Uterus (tissue), 4 donors: ENCODE measurements at regions of chr5 and their contacts with region 1.

Region 1: GRCh38 chr5:157476702-157477408 is 16.8 kb downstream of the NIPAL4 start:
- DNase-seq: peak in 1 of 2 donors; percentile 54
- H3K4me3 ChIP-seq: no peak overlapping the region
- H3K27ac ChIP-seq: no peak overlapping the region
- H3K4me1 ChIP-seq: no peaks in the 10 kb centered on the region
- H3K27me3 ChIP-seq: no peaks in the 10 kb centered on the region
- CTCF ChIP-seq: peak; percentile 59 to 74 (median 66)
- POLR2A ChIP-seq: no peak

Region 2: GRCh38 chr5:157328277-157328912 is 148.5 kb before region 1 on chr5:
- intact Hi-C with region 1: loop called (anchors 5 kb)
- DNase-seq: peak; percentile 59 to 66
- H3K4me3 ChIP-seq: peak overlapping the region in 1 of 2 donors; percentile 7
- H3K27ac ChIP-seq: no peak overlapping the region
- H3K4me1 ChIP-seq: no peaks in the 10 kb centered on the region
- H3K27me3 ChIP-seq: no peaks in the 10 kb centered on the region
- CTCF ChIP-seq: peak; percentile 83 to 88 (median 87)
- POLR2A ChIP-seq: no peak

Region 3: DNA sequence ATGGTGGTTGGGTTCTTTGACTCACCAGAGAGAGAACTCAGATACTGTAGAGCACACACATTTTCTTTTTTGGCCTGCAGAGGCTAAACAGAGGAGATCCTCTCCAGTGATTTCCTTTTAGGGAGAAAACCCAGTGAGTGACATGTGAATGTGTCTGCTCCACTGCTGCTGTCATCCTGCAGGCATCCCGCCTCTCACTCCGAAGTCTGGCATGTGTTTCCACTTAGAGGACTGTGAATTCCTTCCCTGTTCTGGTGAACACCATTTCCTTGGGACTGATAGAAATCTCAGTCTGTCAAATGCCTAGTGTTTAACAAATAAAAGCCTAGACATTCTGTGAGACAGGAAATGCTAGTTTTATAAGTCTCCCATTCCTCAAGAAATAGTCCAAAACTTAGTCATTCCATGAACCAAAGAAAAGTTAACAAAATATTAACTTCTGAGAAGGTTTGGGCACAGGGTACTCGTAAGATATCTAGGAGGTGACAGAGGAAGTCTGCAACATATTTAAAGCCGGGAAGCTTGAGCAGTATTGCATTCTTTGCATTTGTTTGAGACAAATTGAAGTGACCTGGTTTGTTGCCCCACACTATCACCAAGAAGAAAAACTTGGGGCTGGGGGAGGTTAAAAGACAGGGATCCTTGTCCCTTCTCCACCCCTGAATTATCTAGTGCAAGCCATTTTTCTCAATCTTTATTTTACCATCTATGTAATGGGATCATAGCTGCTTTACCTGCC is 91.7 kb before region 1 on chr5:
- intact Hi-C with region 1: loop called (anchors 10 kb)
- DNase-seq: peak; percentile 73 to 84
- H3K4me3 ChIP-seq: no peak overlapping the region
- H3K27ac ChIP-seq: peak overlapping the region; percentile 87 to 88
- H3K4me1 ChIP-seq: peaks cover 5 to 7% of the 10 kb centered on the region in 2 donors
- H3K27me3 ChIP-seq: no peaks in the 10 kb centered on the region
- CTCF ChIP-seq: no peak
- POLR2A ChIP-seq: no peak

Region 4: DNA sequence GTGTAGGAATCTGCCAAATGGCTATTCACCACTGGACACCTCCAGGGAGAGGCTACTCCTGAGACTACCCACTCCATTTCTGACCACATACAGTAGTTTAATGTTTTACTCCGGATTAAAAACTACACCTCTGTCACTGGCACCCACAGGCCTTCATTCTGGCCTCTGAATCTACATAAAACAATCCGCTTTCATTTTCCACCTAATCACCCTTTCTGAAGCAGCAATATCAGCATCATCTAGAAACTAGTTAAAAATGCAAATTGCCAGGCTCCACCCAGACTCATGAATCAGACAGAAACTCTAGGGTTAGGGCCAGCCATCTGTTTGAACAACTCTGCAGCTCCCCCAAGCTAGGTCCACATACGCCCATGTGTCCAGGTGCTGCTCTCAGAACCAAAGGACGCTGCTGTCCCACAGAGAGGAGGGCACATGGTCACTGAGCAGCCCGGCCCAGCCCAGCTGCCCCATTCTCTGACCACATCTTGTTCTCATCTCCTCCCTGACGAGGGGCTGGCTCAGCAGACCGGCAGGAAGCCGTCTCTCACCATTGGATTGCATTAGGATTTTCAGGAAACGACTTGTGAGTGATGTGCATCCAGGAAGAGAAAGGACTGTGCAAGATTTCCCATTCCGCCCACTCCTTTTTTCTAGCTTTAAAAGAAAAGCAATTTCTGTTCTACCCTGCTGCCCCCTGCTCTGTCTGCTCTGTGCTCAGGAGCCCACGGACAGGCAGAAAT is 64.0 kb after region 1 on chr5:
- intact Hi-C with region 1: no loop called
- DNase-seq: peak; percentile 39 to 55
- H3K4me3 ChIP-seq: peak overlapping the region in 1 of 2 donors; percentile 1
- H3K27ac ChIP-seq: peak overlapping the region; percentile 68 to 73
- H3K4me1 ChIP-seq: peaks cover 0 to 11% of the 10 kb centered on the region in 2 donors
- H3K27me3 ChIP-seq: no peaks in the 10 kb centered on the region
- CTCF ChIP-seq: no peak
- POLR2A ChIP-seq: no peak

Region 5: GRCh38 chr5:157558041-157558595 is 81.3 kb after region 1 on chr5:
- intact Hi-C with region 1: no loop called
- DNase-seq: no peak
- H3K4me3 ChIP-seq: no peak overlapping the region
- H3K27ac ChIP-seq: no peak overlapping the region
- H3K4me1 ChIP-seq: peaks cover 6 to 10% of the 10 kb centered on the region in 2 donors
- H3K27me3 ChIP-seq: no peaks in the 10 kb centered on the region
- CTCF ChIP-seq: no peak
- POLR2A ChIP-seq: no peak

Region 6: GRCh38 chr5:157607371-157608161 is 130.7 kb after region 1 on chr5:
- intact Hi-C with region 1: no loop called
- DNase-seq: no peak
- H3K4me3 ChIP-seq: no peak overlapping the region
- H3K27ac ChIP-seq: no peak overlapping the region
- H3K4me1 ChIP-seq: no peaks in the 10 kb centered on the region
- H3K27me3 ChIP-seq: no peaks in the 10 kb centered on the region
- CTCF ChIP-seq: no peak
- POLR2A ChIP-seq: no peak

Region 7: DNA sequence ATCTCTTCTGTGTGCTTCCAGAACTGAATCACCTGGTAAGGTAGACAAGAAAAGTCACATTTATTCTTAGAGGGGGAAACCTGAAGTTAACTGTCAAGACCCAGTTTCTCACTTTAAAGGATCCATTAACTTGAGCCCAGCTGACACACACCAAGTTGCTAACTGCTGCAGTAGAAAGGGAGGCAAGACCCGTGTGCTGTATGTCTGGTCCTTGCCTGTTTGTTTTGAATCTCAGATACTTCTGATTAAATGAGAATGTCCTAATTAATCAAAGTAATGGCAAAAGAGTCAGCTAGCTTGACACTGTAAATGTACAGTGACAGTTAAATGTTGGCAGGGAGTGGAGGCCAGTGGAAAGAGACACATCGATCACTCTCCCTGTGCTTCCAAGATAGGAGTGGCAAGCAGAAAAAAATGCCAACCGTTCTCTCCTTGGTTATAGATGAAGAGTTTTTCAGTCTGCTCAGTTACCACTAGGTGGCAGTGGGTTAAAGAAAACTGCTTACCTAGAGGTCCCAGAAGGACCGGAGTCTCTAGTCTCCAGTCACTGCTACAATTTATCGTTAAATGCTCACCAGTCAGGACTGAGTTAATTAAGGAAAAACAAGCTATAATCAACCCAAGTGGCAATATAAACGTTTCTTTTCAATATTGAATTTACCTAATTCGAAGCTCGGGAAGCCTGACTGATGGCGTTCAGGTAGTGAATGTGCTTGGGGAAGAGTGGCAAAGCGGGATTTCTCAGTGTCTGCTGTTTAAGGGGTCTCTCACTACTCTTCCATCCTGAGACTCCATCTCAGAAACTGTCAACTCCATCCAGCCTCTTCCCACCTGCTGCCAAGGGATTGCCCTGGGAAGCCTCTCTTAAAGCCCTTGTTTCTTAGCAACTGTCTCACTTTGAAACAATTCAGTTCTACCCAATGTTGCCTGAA is 285.1 kb after region 1 on chr5:
- intact Hi-C with region 1: no loop called
- DNase-seq: peak in 1 of 2 donors; percentile 31
- H3K4me3 ChIP-seq: no peak overlapping the region
- H3K27ac ChIP-seq: no peak overlapping the region
- H3K4me1 ChIP-seq: no peaks in the 10 kb centered on the region
- H3K27me3 ChIP-seq: no peaks in the 10 kb centered on the region
- CTCF ChIP-seq: peak; percentile 67 to 73 (median 69)
- POLR2A ChIP-seq: no peak